ENCODE measurements at regions of chr5 and their contacts with region 1.

Region 1: GRCh38 chr5:87762631-87763030 is 349.9 kb upstream of the CCNH start:
- DNase-seq: peak; percentile 90
- ATAC-seq: peak; percentile 99
- H3K4me3 ChIP-seq: no peak overlapping the region
- H3K27ac ChIP-seq: peak overlapping the region; percentile 48
- H3K4me1 ChIP-seq: peaks cover 22% of the 10 kb centered on the region
- H3K27me3 ChIP-seq: no peaks in the 10 kb centered on the region
- CTCF ChIP-seq: no peak

Region 2: GRCh38 chr5:87686975-87687374 is 75.7 kb before region 1 on chr5:
- CTCF ChIA-PET with region 1: no interaction called
- POLR2A ChIA-PET with region 1: no interaction called
- intact Hi-C with region 1: loop called (anchors 5 kb)
- DNase-seq: no peak
- ATAC-seq: no peak
- H3K4me3 ChIP-seq: no peak overlapping the region
- H3K27ac ChIP-seq: no peak overlapping the region
- H3K4me1 ChIP-seq: no peaks in the 10 kb centered on the region
- H3K27me3 ChIP-seq: no peaks in the 10 kb centered on the region
- CTCF ChIP-seq: no peak

Region 3: GRCh38 chr5:87924451-87925126 is 162.0 kb after region 1 on chr5:
- CTCF ChIA-PET with region 1: no interaction called
- POLR2A ChIA-PET with region 1: no interaction called
- intact Hi-C with region 1: no loop called
- DNase-seq: peak; percentile 95
- ATAC-seq: peak; percentile 100
- H3K4me3 ChIP-seq: peak overlapping the region; percentile 30; the same call in 1 of the 2 replicates
- H3K27ac ChIP-seq: peak overlapping the region; percentile 48
- H3K4me1 ChIP-seq: peaks cover 15% of the 10 kb centered on the region
- H3K27me3 ChIP-seq: no peaks in the 10 kb centered on the region
- CTCF ChIP-seq: peak; percentile 42

Region 4: DNA sequence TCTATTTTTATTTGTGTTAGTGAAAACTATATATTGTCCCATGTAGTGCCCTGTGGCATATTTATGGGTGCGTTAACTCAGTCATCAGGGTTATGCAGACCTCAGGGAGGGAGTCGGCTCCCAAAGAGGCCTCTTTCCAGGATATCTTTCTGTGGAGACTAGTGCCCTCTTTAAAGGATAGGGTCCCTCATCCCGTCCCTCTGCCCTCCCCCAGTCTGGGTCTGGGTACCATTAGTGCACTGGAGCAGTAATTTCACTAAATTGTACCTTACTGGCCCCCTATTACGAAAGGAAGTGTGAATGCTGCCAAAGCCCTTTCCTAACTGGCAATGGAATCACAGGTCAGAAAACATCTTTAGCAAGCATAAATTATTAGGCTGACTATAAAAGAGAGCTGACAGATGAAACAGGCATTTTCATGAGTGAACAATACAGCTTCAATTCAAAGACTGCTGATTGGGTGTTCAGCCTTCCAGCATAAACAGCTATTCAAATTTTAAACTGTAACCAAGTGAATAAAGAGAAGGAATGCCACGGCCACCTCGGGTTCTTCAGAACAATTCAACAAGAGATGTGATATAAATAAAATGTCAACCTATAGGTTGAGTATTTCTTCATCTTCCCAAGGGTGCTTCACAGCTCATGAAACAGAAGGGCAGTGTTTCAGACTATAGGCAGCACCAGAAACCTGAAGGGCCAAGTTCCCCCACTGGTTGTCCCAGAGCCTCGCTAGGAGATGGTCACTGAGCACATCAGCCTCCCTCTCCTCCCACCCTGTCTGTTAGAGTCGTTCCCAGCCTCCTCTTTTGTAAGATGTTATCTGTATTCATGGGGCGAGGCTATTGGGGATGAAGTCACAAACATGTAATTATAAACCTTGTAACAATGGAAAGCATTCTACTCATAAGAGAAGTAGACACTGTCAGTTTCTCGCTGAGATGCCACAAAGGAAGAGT is 187.3 kb after region 1 on chr5:
- CTCF ChIA-PET with region 1: no interaction called
- POLR2A ChIA-PET with region 1: no interaction called
- intact Hi-C with region 1: no loop called
- DNase-seq: no peak
- ATAC-seq: no peak
- H3K4me3 ChIP-seq: no peak overlapping the region
- H3K27ac ChIP-seq: no peak overlapping the region
- H3K4me1 ChIP-seq: no peaks in the 10 kb centered on the region
- H3K27me3 ChIP-seq: no peaks in the 10 kb centered on the region
- CTCF ChIP-seq: no peak